ENCODE measurements at regions of chr9 and their contacts with region 1.

Region 1: DNA sequence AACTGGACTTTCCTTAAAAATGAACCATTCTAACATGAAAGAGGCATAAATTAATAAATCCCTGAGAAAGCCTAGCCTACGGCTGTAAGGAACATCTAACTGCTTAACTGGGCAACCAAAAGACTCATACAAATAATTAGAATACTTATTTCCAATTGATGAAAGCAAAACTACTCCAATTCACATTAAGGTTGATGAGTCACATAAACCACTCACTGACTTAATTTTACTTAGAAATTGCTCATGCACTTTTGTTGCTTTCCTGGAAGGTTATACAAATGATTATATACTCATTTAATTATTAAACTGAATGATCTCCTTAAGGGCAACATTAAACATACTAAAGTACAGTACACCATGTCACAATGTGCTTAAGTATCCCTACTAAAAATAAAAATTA is 101.9 kb downstream of the NFIB start:
- DNase-seq: peak; percentile 56
- ATAC-seq: peak; percentile 32
- H3K4me3 ChIP-seq: peak overlapping the region; percentile 54; the same call in 1 of the 2 replicates
- H3K27ac ChIP-seq: peak overlapping the region; percentile 75
- H3K4me1 ChIP-seq: peaks cover 89% of the 10 kb centered on the region
- H3K27me3 ChIP-seq: no peaks in the 10 kb centered on the region
- CTCF ChIP-seq: no peak

Region 2: GRCh38 chr9:14179449-14179848 is 32.6 kb before region 1 on chr9:
- CTCF ChIA-PET with region 1: no interaction called
- POLR2A ChIA-PET with region 1: no interaction called
- intact Hi-C with region 1: loop called (anchors 2 kb)
- DNase-seq: peak; percentile 84
- ATAC-seq: peak; percentile 91
- H3K4me3 ChIP-seq: peak overlapping the region; percentile 22; the same call in 1 of the 2 replicates
- H3K27ac ChIP-seq: peak overlapping the region; percentile 66
- H3K4me1 ChIP-seq: peaks cover 37% of the 10 kb centered on the region
- H3K27me3 ChIP-seq: no peaks in the 10 kb centered on the region
- CTCF ChIP-seq: no peak

Region 3: DNA sequence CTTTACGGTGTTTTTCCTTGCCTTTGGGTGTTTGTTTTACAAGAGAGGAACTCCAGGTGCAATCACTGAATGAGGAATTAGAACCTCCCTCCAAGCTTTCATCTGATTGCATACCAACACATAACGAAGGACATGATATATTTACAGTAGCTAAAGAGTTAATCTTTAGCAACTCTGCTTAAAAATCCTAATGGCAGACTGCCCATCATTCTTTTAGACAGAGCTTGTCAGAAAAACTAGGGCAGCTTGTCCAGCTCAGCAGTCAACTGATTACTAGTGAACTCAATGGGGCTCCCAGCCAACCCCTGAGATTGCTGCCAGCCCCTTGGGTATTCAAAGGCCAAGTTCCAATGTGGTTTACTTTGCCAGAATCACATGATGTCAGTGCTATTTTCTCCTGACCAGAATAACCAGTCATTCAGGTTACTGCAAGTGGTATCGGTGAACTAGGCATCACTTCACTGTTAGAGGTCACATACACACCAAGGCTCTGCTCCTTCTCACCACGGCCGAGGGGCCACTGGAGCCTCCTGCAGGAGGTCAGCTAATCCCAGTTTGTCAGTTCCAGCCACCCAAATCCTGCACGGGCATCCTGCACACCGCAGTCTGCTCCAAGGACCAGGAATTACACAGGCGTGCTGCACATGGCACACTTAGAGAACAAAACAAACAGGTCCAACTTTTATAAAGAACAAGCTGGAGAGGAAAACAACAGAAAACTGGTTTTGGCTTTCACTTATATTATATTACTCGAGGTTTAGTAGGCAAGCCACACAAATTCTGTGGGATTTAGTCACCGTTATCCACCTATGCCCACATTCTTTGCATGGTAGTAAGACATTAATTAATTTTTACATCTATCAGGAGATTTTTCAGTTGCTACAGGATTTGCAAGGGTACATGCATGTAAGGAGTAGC is 39.3 kb after region 1 on chr9:
- CTCF ChIA-PET with region 1: no interaction called
- POLR2A ChIA-PET with region 1: no interaction called
- intact Hi-C with region 1: loop called (anchors 2 kb)
- DNase-seq: peak; percentile 92
- ATAC-seq: peak; percentile 75
- H3K4me3 ChIP-seq: peak overlapping the region; percentile 62
- H3K27ac ChIP-seq: peak overlapping the region; percentile 91
- H3K4me1 ChIP-seq: peaks cover 40% of the 10 kb centered on the region
- H3K27me3 ChIP-seq: no peaks in the 10 kb centered on the region
- CTCF ChIP-seq: no peak